ENCODE measurements at regions of chr1 and their contacts with region 1.

Region 1: GRCh38 chr1:183506561-183506960 is 34.3 kb downstream of the SMG7 start:
- DNase-seq: no peak
- ATAC-seq: no peak
- H3K4me3 ChIP-seq: no peak overlapping the region
- H3K27ac ChIP-seq: no peak overlapping the region
- H3K4me1 ChIP-seq: peaks cover 4% of the 10 kb centered on the region; the same call in 1 of the 2 replicates
- H3K27me3 ChIP-seq: no peaks in the 10 kb centered on the region
- CTCF ChIP-seq: no peak

Region 2: GRCh38 chr1:183239793-183240525 is 266.6 kb before region 1 on chr1:
- CTCF ChIA-PET with region 1: interaction called, 11 read pairs
- POLR2A ChIA-PET with region 1: no interaction called
- in situ Hi-C with region 1: no loop called
- intact Hi-C with region 1: no loop called
- DNase-seq: no peak
- ATAC-seq: no peak
- H3K4me3 ChIP-seq: no peak overlapping the region
- H3K27ac ChIP-seq: no peak overlapping the region
- H3K4me1 ChIP-seq: peaks cover 7% of the 10 kb centered on the region
- H3K27me3 ChIP-seq: no peaks in the 10 kb centered on the region
- CTCF ChIP-seq: no peak

Region 3: GRCh38 chr1:183368202-183369108 is 138.1 kb before region 1 on chr1:
- CTCF ChIA-PET with region 1: no interaction called
- POLR2A ChIA-PET with region 1: no interaction called
- in situ Hi-C with region 1: no loop called
- intact Hi-C with region 1: no loop called
- DNase-seq: no peak
- ATAC-seq: no peak
- H3K4me3 ChIP-seq: no peak overlapping the region
- H3K27ac ChIP-seq: no peak overlapping the region
- H3K4me1 ChIP-seq: no peaks in the 10 kb centered on the region
- H3K27me3 ChIP-seq: no peaks in the 10 kb centered on the region
- CTCF ChIP-seq: no peak